ENCODE measurements at regions of chr11 and their contacts with region 1.

Region 1: GRCh38 chr11:92552942-92553341 is 328.3 kb downstream of the FAT3 start:
- DNase-seq: no peak
- H3K4me3 ChIP-seq: no peak overlapping the region
- CTCF ChIP-seq: no peak

Region 2: DNA sequence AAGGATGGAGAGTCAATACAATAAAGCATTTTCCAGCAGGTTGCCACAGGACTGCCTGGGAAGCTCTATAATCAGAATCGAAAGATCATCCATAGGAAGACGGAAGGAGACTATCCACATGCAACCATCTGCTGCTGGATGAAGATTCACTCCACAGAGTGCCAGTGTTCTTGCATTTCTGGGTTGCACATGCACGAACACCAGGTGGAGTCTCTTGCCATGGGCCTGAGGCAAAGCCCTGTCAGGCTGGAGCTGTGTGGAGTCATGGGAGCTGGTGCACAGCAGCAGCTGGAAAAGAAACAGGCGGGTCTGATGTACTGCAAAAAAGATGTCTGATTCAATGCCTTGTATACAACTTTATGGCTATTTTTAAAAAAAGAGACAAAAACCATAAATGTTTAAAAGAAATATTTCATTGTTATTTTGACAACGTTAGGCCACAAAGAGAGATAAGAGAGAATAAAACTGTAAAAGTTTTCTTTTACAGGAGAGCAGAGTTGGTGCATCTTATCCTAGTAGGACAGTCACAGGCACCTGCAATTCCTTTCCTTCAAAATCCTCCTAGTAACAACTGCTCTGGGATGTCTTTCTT is 341.3 kb before region 1 on chr11:
- CTCF ChIA-PET with region 1: interaction called, 13 read pairs
- POLR2A ChIA-PET with region 1: no interaction called
- DNase-seq: no peak
- H3K4me3 ChIP-seq: no peak overlapping the region
- CTCF ChIP-seq: peak; percentile 69

Region 3: DNA sequence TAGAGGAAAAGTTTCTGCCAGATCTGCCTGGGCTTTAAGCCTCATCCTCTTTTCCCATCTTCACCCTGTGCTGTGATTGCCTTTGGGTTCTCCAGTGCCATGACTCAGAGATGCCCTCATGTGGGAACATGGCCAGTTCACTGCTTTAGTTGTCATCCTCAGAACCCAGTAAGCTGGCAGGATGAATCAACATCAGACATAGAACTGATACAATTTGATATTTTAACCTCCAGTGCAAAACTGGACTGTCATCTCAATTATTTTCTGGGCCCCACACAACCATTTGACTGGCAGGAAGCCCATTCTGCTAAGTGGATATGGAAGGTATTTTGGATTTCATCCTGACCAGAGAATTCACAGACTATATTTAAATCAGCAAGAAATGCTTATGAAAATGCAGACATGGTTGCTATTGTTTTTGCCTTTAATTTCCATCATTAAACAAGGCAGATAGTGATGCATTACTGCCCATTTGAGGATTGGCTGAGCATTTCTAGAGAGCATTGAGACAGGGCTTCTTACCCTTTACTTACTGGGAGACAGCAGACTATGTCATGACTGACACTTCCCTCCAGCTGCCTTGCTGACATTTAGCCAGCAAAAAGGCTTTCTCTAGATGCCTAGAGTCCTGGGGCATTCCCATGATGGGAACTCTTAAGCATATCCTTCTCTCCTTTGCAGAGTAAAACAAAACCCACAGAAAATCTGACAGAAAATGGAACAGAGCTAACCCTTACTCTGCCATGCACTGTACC is 89.4 kb after region 1 on chr11:
- CTCF ChIA-PET with region 1: no interaction called
- POLR2A ChIA-PET with region 1: no interaction called
- DNase-seq: no peak
- H3K4me3 ChIP-seq: no peak overlapping the region
- CTCF ChIP-seq: no peak

Measured in AG04449 (cell line).